IMR-90 (cell line): ENCODE measurements at regions of chr2 and their contacts with region 1.

Region 1: GRCh38 chr2:121400201-121400600 is 115.2 kb upstream of the TFCP2L1 start:
- DNase-seq: peak; percentile 85
- ATAC-seq: peak; percentile 82
- H3K4me3 ChIP-seq: no peak overlapping the region
- H3K27ac ChIP-seq: peak overlapping the region; percentile 43; the same call in 1 of the 2 replicates
- H3K4me1 ChIP-seq: peaks cover 4% of the 10 kb centered on the region
- H3K27me3 ChIP-seq: no peaks in the 10 kb centered on the region
- CTCF ChIP-seq: no peak
- POLR2A ChIP-seq: no peak
- RAD21 ChIP-seq: no peak; the same call in 1 of the 2 replicates

Region 2: GRCh38 chr2:121451398-121451797 is 51.2 kb after region 1 on chr2:
- CTCF ChIA-PET with region 1: no interaction called
- POLR2A ChIA-PET with region 1: no interaction called
- dilution Hi-C with region 1: no loop called
- in situ Hi-C with region 1: no loop called
- intact Hi-C with region 1: loop called (anchors 2 kb)
- DNase-seq: peak; percentile 91
- ATAC-seq: peak; percentile 92
- H3K4me3 ChIP-seq: no peak overlapping the region
- H3K27ac ChIP-seq: no peak overlapping the region
- H3K4me1 ChIP-seq: peaks cover 11% of the 10 kb centered on the region
- H3K27me3 ChIP-seq: no peaks in the 10 kb centered on the region
- CTCF ChIP-seq: no peak
- POLR2A ChIP-seq: no peak
- RAD21 ChIP-seq: no peak

Region 3: GRCh38 chr2:121722479-121722878 is 322.3 kb after region 1 on chr2:
- CTCF ChIA-PET with region 1: interaction called, 12 read pairs
- POLR2A ChIA-PET with region 1: no interaction called
- dilution Hi-C with region 1: no loop called
- in situ Hi-C with region 1: loop called (anchors 10 kb)
- intact Hi-C with region 1: loop called (anchors 1 kb)
- DNase-seq: peak; percentile 87
- ATAC-seq: peak; percentile 55
- H3K4me3 ChIP-seq: no peak overlapping the region
- H3K27ac ChIP-seq: peak overlapping the region; percentile 59; the same call in 1 of the 2 replicates
- H3K4me1 ChIP-seq: peaks cover 6% of the 10 kb centered on the region; the same call in 1 of the 2 replicates
- H3K27me3 ChIP-seq: no peaks in the 10 kb centered on the region
- CTCF ChIP-seq: no peak; the same call in 1 of the 2 replicates
- POLR2A ChIP-seq: no peak
- RAD21 ChIP-seq: no peak